Mucosa of descending colon (tissue), 3 donors: ENCODE measurements at regions of chr9 and their contacts with region 1.

Region 1: DNA sequence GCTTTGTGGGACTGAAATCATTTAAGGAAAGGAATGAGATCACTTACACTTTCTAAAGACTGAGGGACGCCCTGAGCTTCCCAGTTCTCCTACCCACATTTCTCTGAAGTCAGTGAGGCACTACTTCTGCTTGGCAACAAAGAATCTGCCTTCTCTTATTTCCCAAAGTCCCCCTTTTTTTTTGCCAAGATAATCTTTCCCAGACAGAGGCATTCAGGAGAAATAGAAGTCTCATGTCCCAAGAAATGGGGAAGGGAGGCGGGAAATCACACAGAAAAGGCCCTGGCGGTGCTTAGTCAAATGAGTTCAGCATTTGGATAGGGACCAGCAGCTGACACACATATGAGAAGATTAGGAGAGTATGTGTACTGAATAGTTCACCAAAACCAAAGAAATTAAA is 159.7 kb downstream of the MUSK start:
- DNase-seq: peak in 1 of 3 donors; percentile 47
- ATAC-seq: peak; percentile 30
- H3K4me3 ChIP-seq: no peak overlapping the region
- H3K4me1 ChIP-seq: no peaks in the 10 kb centered on the region
- CTCF ChIP-seq: no peak

Region 2: DNA sequence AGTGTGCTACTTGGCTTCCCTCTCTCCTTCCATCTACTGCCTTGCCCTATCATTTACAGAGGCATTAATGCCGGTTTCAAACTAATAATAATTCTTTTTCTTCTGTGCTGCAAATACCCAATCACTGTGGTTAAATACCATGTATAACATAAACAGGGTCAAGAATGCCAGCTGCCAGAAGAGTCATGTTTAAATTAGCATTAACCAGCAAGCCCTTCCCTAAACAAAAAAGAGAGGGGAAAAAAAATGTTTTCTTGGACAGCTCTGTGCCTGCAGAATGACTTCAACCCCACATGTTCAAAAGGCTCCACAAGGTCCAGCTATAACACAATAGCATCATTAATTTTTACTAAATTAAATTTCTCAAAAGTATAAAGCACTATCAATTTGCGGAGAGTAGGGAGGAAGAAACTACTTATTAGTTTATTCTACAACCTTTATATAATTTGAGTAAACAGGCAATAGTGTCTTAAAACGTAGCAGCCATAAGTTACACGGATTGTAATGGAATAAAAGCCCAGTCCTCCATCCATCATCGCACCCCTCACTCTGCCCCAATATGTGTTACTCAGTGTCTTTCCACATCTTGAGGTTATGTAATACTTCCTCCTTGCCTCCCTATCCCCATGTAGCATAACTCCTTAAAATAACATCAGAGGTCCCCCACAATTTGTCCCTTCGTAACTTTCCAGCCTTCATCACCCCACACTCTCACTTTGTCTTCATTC is 206.1 kb after region 1 on chr9:
- intact Hi-C with region 1: loop called in 1 of 2 experiments (anchors 5 kb)
- DNase-seq: no peak
- ATAC-seq: no peak
- H3K4me3 ChIP-seq: no peak overlapping the region
- H3K4me1 ChIP-seq: no peaks in the 10 kb centered on the region
- CTCF ChIP-seq: no peak

Region 3: DNA sequence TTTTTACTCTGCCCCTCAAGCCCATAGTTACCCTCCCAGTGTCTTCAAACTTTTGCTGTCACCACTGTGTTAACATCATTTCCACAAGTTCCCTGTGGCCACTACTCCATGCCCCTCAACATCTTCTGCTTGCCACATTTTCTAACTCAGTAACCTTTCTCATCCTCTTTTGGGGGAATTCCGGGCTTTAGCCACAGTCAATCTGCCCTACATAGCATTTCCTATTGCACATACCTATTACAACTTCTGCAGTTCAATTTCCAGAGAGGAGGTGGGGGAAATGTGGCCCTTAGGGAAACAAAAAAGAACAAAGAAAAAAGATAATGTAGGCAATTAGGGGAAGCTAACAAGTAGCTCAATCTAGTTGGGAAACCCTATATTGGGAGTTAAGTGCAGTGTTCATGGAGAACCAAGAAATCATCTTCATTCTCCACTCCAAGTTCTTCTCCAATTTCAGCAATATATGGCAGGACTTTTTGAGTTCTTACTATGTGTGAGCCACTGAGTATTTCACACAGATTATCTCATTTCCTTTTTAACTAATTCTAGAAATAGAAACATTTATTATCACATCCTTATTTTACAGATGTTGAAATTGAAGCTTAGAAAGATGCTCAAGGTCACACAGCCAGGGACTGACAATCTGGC is 250.3 kb after region 1 on chr9:
- intact Hi-C with region 1: no loop called
- DNase-seq: no peak
- ATAC-seq: no peak
- H3K4me3 ChIP-seq: no peak overlapping the region
- H3K4me1 ChIP-seq: no peaks in the 10 kb centered on the region
- CTCF ChIP-seq: no peak

Region 4: GRCh38 chr9:111212874-111213273 is 384.6 kb after region 1 on chr9:
- intact Hi-C with region 1: no loop called
- DNase-seq: no peak
- ATAC-seq: no peak
- H3K4me3 ChIP-seq: no peak overlapping the region
- H3K4me1 ChIP-seq: no peaks in the 10 kb centered on the region
- CTCF ChIP-seq: no peak